Activated T-helper 2 cell treated with anti-CD3 and anti-CD28 coated beads, Interferon-gamma antibody, Interleukin-2, Interleukin-4, amounts not matched to agents 10 μg/mL and 5 μg/mL and 100 μg/mL, durations not matched to agents 14 hours and 24 hours and 36 hours (primary cell): ENCODE measurements at regions of chr1 and their contacts with region 1.

Region 1: DNA sequence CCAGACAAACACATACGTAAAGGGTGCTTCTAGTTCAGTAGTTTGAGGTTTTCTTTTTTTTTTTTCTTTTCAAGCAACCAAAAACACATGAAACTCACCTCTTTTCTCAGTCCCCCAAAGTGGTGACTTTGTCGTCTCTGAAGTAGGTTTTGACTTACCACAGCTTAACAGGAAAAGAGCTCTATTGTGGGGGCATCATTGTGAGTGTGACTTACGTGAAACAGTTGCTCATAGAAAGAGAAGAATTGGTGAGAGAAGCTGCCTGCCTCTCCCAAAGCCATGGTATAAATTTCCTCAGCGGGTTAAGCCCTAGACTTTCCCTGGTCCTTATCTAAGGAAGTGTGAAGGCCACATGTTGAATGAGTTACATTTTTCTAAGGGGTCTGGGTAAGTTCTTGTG is 11.9 kb downstream of the FASLG start:
- DNase-seq: no peak
- H3K4me3 Mint-ChIP-seq: no peak overlapping the region
- H3K27ac Mint-ChIP-seq: peak overlapping the region; percentile 61
- H3K4me1 Mint-ChIP-seq: peaks cover 77% of the 10 kb centered on the region
- H3K27me3 Mint-ChIP-seq: no peaks in the 10 kb centered on the region

Region 2: DNA sequence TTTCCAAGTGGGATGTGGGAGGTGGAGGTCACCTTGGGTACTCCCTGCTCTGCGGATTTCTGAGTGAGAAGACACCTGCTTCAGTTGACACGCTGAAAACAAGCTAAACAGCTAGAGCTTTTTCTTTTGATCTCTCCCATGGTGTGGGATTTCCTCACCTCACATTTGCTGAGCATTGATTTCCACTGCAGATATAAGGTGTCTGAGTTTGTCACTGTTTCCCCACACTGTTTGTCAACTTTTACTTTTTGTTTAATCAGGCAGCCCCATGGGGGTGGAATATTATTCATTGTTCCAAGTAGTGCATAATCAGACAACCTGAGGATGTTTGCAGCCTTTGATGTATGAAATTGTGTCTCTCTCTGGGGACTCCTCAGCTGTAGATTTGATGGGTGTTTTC is 37.7 kb after region 1 on chr1:
- intact Hi-C with region 1: loop called (anchors 2 kb)
- DNase-seq: peak; percentile 47
- H3K4me3 Mint-ChIP-seq: peak overlapping the region; percentile 24
- H3K27ac Mint-ChIP-seq: peak overlapping the region; percentile 81
- H3K4me1 Mint-ChIP-seq: peaks cover 53% of the 10 kb centered on the region
- H3K27me3 Mint-ChIP-seq: no peaks in the 10 kb centered on the region